ENCODE measurements at regions of chr6 and their contacts with region 1.

Region 1: GRCh38 chr6:149857541-149857940 is 6.6 kb downstream of the LRP11 start:
- DNase-seq: no peak
- H3K4me3 ChIP-seq: no peak overlapping the region
- H3K27ac ChIP-seq: no peak overlapping the region
- H3K4me1 ChIP-seq: peaks cover 0 to 37% (median 22%) of the 10 kb centered on the region in 4 donors
- H3K27me3 ChIP-seq: no peaks in the 10 kb centered on the region
- CTCF ChIP-seq: no peak
- EP300 ChIP-seq: no peak
- POLR2A ChIP-seq: no peak

Region 2: GRCh38 chr6:149608381-149608982 is 249.1 kb before region 1 on chr6:
- in situ Hi-C with region 1: no loop called
- intact Hi-C with region 1: no loop called
- DNase-seq: no peak
- H3K4me3 ChIP-seq: no peak overlapping the region
- H3K27ac ChIP-seq: no peak overlapping the region
- H3K4me1 ChIP-seq: peaks cover 0 to 5% (median 0%) of the 10 kb centered on the region in 4 donors
- H3K27me3 ChIP-seq: no peaks in the 10 kb centered on the region
- CTCF ChIP-seq: no peak
- EP300 ChIP-seq: no peak
- POLR2A ChIP-seq: no peak

Region 3: DNA sequence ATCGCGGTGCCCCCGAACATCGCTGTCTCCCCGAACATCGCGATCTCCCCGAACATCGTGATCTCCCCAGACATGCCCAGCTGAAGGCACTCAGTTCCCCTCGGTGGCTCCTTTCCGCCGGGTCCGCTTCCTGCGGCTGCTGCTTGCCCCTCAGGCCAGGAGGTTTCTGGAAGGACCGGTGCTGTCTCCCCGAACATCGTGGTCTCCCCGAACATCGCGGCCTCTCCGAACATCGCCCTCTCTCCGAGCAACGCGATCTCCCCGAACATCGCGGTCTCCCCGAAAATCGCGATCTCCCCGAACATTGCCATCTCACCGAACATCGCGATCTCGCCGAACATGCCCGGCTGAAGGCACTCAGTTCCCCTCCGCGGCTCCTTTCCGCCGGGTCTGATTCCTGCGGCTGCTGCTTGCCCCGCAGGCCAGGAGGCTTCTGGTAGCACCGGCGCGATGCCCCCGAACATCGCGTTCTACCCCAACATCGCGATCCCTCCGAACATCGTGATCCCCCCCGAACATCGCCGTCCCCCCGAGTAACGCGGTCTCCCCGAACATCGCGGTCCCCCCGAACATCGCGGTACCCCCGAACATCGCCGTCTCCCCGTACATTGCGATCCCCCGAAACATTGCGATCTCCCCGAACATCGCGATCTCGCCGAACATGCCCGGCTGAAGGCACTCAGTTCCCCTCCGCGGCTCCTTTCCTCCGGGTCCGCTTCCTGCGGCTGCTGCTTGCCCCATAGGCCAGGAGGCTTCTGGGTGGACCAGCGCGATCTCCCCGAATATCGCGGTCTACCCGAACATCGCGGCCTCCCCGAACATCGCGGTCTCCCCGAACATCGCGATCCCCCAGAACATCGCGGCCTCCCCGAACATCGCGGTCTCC is 107.0 kb after region 1 on chr6:
- in situ Hi-C with region 1: no loop called
- intact Hi-C with region 1: loop called (anchors 1 kb)
- DNase-seq: no peak
- H3K4me3 ChIP-seq: peak overlapping the region in 3 of 4 donors; percentile 24 to 45 (median 33)
- H3K27ac ChIP-seq: no peak overlapping the region
- H3K4me1 ChIP-seq: peaks cover 11 to 24% (median 23%) of the 10 kb centered on the region in 4 donors
- H3K27me3 ChIP-seq: peaks cover 92% of the 10 kb centered on the region
- CTCF ChIP-seq: no peak
- EP300 ChIP-seq: no peak
- POLR2A ChIP-seq: no peak

Measured in transverse colon (tissue), 4 donors.